Sciatic nerve (tissue), 2 donors: ENCODE measurements at regions of chr15 and their contacts with region 1.

Region 1: GRCh38 chr15:71743861-71744382 is 66.4 kb upstream of the NR2E3 start:
- DNase-seq: peak; percentile 80
- ATAC-seq: peak; percentile 62

Region 2: DNA sequence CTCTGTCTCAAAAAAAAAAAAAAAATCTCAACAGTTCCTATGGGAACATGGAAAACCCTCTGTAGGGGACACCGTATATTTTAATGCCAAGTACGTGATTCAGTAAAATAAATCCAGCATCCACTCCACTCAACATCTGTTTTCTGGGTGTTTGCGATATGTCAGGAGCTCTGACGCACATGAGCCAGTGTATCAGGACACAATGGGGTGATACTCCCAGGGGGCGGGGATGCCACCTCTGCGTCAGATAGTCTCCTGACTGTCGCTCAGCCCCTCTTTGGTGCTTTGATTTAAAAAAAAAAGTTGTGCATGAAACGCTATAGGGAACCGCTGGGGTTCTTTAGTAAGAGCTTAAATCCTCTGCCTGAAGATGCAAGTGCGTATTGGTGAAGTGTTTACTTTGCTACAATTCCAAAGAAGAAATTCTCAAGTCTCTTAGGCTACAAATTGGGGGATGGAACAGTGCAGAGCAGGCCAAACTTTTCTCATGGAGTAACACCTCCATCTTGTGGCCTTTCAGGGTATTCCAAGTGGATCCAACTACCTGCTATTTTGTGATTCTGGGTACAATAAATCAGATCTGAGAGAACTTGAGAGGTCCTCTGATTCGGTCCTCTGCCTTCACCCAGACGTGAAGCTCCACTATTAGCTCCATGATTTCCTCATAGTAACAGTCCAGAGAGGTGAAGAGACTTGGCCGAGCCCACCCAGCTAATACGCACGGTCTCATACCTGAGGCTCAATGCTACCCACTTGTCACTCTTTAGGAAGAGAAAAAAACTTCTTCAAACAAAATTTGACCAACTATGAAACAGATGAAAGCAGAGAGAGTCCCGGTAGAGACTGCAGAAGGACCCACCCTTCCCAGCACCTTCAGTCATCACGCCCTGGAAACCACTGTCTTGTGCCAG is 57.2 kb after region 1 on chr15:
- intact Hi-C with region 1: loop called (anchors 5 kb)
- DNase-seq: no peak
- ATAC-seq: peak; percentile 91

Region 3: GRCh38 chr15:72168111-72168808 is 424.3 kb after region 1 on chr15:
- intact Hi-C with region 1: loop called (anchors 10 kb)
- DNase-seq: no peak
- ATAC-seq: no peak